ENCODE measurements at regions of chr2 and their contacts with region 1.

Region 1: GRCh38 chr2:20642055-20642971 is 8.6 kb downstream of the HS1BP3 start:
- DNase-seq: peak; percentile 82
- H3K4me3 ChIP-seq: no peak overlapping the region
- H3K27ac ChIP-seq: peak overlapping the region; percentile 64 to 88 (median 85)
- H3K4me1 ChIP-seq: peaks cover 0 to 14% (median 10%) of the 10 kb centered on the region in 4 donors
- H3K27me3 ChIP-seq: no peaks in the 10 kb centered on the region
- CTCF ChIP-seq: peak; percentile 87 to 95 (median 92)
- EP300 ChIP-seq: no peak
- POLR2A ChIP-seq: no peak

Region 2: GRCh38 chr2:19899985-19900930 is 742.1 kb before region 1 on chr2:
- in situ Hi-C with region 1: loop called in 1 of 4 experiments (anchors 25 kb)
- intact Hi-C with region 1: no loop called
- DNase-seq: no peak
- H3K4me3 ChIP-seq: peak overlapping the region; percentile 65 to 86 (median 79)
- H3K27ac ChIP-seq: peak overlapping the region; percentile 92 to 96 (median 96)
- H3K4me1 ChIP-seq: peaks cover 18 to 60% (median 26%) of the 10 kb centered on the region in 4 donors
- H3K27me3 ChIP-seq: no peaks in the 10 kb centered on the region
- CTCF ChIP-seq: no peak
- EP300 ChIP-seq: no peak
- POLR2A ChIP-seq: no peak

Region 3: DNA sequence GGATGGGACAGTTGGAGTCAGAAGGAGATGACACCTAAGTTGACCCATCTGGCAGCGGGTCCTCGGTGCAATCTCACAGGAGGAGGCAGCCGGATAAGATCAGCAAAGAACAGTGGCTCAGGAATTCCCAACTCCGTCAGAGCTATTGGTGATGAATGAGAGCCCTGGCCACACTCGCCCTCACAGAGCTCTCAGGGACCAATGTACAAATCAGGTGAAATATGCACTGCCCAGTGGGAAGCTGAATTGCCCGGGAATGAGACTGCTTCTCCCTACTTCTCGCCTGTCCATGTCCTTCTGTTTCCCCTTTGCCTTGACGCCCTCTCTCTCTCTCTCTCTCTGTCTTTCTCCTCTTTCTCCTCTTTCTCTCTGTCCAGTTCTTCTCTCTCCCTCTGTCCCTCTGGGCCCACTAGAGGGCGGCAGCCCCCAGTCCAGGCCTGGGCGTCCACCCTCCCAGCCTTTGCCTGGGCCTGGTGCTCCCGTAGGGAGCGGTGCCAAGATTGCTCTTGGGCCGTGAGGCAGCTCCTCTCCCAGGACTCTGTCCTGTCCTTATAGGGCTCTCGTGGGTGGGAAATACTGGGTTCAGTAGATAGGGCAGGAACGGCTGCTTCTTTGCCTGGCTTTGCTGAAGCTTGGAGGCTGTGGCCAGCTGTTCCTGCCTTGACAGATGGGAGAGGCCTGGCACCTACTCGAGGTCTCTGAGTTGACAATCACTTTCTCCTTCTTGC is 263.4 kb before region 1 on chr2:
- in situ Hi-C with region 1: no loop called
- intact Hi-C with region 1: loop called (anchors 5 kb)
- DNase-seq: peak; percentile 83
- H3K4me3 ChIP-seq: no peak overlapping the region
- H3K27ac ChIP-seq: peak overlapping the region; percentile 62 to 75 (median 68)
- H3K4me1 ChIP-seq: peaks cover 14 to 35% (median 27%) of the 10 kb centered on the region in 4 donors
- H3K27me3 ChIP-seq: no peaks in the 10 kb centered on the region
- CTCF ChIP-seq: peak; percentile 63 to 77 (median 77)
- EP300 ChIP-seq: no peak
- POLR2A ChIP-seq: no peak

Region 4: GRCh38 chr2:20391951-20392699 is 250.2 kb before region 1 on chr2:
- in situ Hi-C with region 1: loop called in 1 of 4 experiments (anchors 10 kb)
- intact Hi-C with region 1: no loop called
- DNase-seq: peak; percentile 33
- H3K4me3 ChIP-seq: no peak overlapping the region
- H3K27ac ChIP-seq: no peak overlapping the region
- H3K4me1 ChIP-seq: peaks cover 0 to 5% (median 2%) of the 10 kb centered on the region in 4 donors
- H3K27me3 ChIP-seq: no peaks in the 10 kb centered on the region
- CTCF ChIP-seq: no peak
- EP300 ChIP-seq: no peak
- POLR2A ChIP-seq: no peak

Region 5: GRCh38 chr2:20438334-20439192 is 203.8 kb before region 1 on chr2:
- in situ Hi-C with region 1: loop called in 2 of 4 experiments (anchors 10 to 25 kb)
- intact Hi-C with region 1: no loop called
- DNase-seq: peak; percentile 57
- H3K4me3 ChIP-seq: no peak overlapping the region
- H3K27ac ChIP-seq: peak overlapping the region; percentile 42 to 77 (median 69)
- H3K4me1 ChIP-seq: peaks cover 2 to 28% (median 17%) of the 10 kb centered on the region in 4 donors
- H3K27me3 ChIP-seq: no peaks in the 10 kb centered on the region
- CTCF ChIP-seq: no peak
- EP300 ChIP-seq: peak; percentile 98
- POLR2A ChIP-seq: peak; percentile 78

Region 6: DNA sequence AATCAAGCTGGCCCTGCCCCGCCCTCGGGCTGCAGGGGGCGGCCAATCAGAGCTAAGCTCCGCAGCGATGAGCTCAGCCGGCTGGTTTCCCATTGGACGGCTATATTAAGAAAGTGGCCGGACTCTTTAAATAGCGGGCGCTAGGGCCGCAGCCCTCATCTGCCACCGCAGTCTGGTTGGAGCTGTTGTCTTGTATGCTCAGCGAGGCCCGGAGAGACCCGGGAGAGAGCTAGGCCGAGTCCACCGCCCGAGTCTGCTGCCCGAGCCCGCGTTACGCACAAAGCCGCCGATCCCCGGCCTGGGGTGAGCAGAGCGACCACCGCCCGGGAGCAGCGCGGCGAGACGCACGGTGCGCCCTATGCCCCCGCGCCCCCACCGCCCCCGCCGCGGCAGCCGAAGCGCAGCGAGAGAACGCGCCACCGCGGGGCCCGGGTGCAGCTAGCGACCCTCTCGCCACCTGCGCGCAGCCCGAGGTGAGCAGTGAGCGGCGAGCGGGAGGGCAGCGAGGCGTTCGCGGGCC is 195.3 kb before region 1 on chr2 and contains the start of gene RHOB:
- in situ Hi-C with region 1: loop called in 1 of 4 experiments (anchors 25 kb)
- intact Hi-C with region 1: loop called (anchors 2 kb)
- DNase-seq: peak; percentile 97
- H3K4me3 ChIP-seq: peak within 1 kb of the TSS; percentile 62 to 96 (median 81)
- H3K27ac ChIP-seq: peak within 1 kb of the TSS; percentile 97 to 99 (median 97)
- H3K4me1 ChIP-seq: peaks cover 9 to 56% (median 27%) of the 10 kb centered on the region in 4 donors
- H3K27me3 ChIP-seq: no peaks in the 10 kb centered on the region
- CTCF ChIP-seq: peak in 1 of 5 experiments; percentile 19
- EP300 ChIP-seq: no peak
- POLR2A ChIP-seq: peak; percentile 100
- total RNA-seq, gene RHOB: 360 to 732 (median 532) TPM

Region 7: GRCh38 chr2:20578895-20579825 is 63.2 kb before region 1 on chr2:
- in situ Hi-C with region 1: no loop called
- intact Hi-C with region 1: no loop called
- DNase-seq: peak; percentile 58
- H3K4me3 ChIP-seq: no peak overlapping the region
- H3K27ac ChIP-seq: peak overlapping the region; percentile 70 to 79 (median 75)
- H3K4me1 ChIP-seq: peaks cover 17 to 29% (median 24%) of the 10 kb centered on the region in 4 donors
- H3K27me3 ChIP-seq: no peaks in the 10 kb centered on the region
- CTCF ChIP-seq: no peak
- EP300 ChIP-seq: no peak
- POLR2A ChIP-seq: no peak

Region 8: GRCh38 chr2:20707601-20708000 is 65.3 kb after region 1 on chr2:
- in situ Hi-C with region 1: no loop called
- intact Hi-C with region 1: no loop called
- DNase-seq: no peak
- H3K4me3 ChIP-seq: no peak overlapping the region
- H3K27ac ChIP-seq: no peak overlapping the region
- H3K4me1 ChIP-seq: peaks cover 0 to 5% (median 0%) of the 10 kb centered on the region in 4 donors
- H3K27me3 ChIP-seq: no peaks in the 10 kb centered on the region
- CTCF ChIP-seq: no peak
- EP300 ChIP-seq: no peak
- POLR2A ChIP-seq: no peak